Activated CD4-positive, alpha-beta T cell treated with anti-CD3 and anti-CD28 coated beads, Interleukin-2, amount 10 ng/mL, durations not matched to agents 24 days and 14 days (primary cell): ENCODE measurements at regions of chr17 and their contacts with region 1.

Region 1: DNA sequence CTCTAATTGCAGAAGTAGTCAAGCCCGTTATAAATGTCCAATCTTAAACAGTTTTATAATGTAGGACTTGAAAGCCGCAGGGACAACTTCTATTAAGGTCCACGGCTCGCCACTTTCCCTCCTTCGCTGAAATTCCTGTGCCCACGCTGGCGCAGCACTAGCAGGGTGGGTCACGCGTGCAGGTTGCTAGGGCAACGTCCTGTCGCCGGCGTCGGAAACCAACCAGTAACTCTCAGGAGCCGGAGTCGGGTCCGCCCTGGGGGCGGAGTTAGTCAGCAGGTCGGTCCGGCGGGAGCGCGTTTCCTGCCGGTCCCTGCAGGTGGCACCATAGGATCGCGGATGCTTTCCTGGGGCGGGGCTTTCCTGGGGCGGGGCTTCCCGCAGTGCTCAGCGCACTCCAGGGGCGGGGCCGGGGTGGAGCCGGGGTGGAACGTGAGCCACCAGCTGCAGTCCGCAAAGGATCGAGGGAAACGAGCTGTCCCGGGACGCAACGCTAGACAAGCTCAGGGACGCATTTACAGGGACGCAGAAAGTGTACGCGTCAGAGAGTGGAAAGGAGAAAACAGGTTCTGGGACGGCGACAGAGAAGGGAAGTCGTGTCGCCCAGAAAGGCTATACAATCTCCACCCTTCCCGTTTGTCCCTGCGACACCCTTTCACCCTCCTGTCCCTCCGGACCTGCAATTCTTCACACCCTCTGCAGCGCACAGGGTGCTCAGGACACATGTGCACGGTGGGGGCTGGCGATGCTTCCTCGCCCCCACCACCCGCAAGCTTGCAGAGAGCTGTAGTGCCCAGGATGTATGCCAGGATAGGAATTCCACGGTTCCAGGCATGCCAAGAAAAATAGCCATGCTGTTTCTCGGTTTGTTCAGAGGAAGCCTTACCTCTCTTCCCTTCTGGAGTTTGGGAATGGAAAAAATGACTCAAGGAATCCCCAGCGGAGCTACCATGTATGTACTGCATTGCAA is 12.4 kb downstream of the COPZ2 start:
- DNase-seq: peak; percentile 99
- H3K4me3 Mint-ChIP-seq: peak overlapping the region; percentile 88
- H3K27ac Mint-ChIP-seq: peak overlapping the region; percentile 83
- H3K4me1 Mint-ChIP-seq: peaks cover 28% of the 10 kb centered on the region
- H3K27me3 Mint-ChIP-seq: peaks cover 22% of the 10 kb centered on the region

Region 2: DNA sequence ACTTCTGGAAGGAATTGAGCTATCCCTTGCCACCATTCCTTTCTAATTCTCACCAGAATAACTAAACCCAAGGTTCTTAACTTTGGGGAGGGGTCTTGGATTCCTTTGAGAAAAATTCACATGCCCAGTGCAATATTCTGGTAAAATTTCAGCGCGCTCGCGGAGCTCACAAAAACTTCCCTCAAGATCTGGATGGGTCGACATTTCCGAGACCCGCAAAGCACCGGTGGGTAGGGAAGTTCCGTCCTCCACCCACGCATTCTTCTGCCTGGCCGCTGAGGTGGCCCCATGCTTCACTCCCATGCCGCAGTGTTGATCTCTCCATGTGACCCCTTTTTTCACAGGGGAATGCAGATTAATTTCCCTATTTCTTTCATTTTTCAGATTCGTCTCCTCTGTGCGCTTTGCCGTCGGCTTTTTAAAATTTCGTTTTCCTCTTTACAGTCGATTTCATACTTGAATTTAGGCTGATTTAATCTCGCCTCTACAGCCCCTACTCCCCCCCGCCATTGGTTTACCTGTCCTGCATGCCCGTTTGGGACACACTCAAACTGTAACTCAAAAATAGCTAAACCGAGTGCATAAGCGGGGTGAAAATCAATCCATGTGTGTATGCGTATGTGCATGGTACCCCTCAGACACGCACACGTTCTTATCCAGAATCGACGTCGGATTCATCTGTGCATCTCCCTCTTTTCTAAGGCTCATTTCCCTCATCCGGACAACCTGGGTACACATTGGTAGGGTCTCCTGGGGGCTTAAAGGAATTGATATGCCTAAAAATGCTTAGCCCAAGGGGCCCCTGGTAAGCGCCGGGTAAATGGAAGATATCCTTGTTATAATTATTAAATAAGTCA is 172.9 kb before region 1 on chr17:
- intact Hi-C with region 1: no loop called
- DNase-seq: no peak
- H3K4me3 Mint-ChIP-seq: peak overlapping the region; percentile 64
- H3K27ac Mint-ChIP-seq: no peak overlapping the region
- H3K4me1 Mint-ChIP-seq: peaks cover 24% of the 10 kb centered on the region
- H3K27me3 Mint-ChIP-seq: peaks cover 83% of the 10 kb centered on the region

Region 3: GRCh38 chr17:47949136-47949759 is 76.0 kb before region 1 on chr17:
- intact Hi-C with region 1: loop called (anchors 2 kb)
- DNase-seq: peak; percentile 96
- H3K4me3 Mint-ChIP-seq: peak overlapping the region; percentile 71
- H3K27ac Mint-ChIP-seq: peak overlapping the region; percentile 78
- H3K4me1 Mint-ChIP-seq: peaks cover 33% of the 10 kb centered on the region
- H3K27me3 Mint-ChIP-seq: no peaks in the 10 kb centered on the region

Region 4: GRCh38 chr17:47967607-47968243 is 57.5 kb before region 1 on chr17:
- intact Hi-C with region 1: no loop called
- DNase-seq: no peak
- H3K4me3 Mint-ChIP-seq: no peak overlapping the region
- H3K27ac Mint-ChIP-seq: no peak overlapping the region
- H3K4me1 Mint-ChIP-seq: peaks cover 17% of the 10 kb centered on the region
- H3K27me3 Mint-ChIP-seq: no peaks in the 10 kb centered on the region

Region 5: GRCh38 chr17:48047741-48048383 is 22.6 kb after region 1 on chr17 and contains the start of gene NFE2L1:
- intact Hi-C with region 1: loop called (anchors 1 kb)
- DNase-seq: peak; percentile 99
- H3K4me3 Mint-ChIP-seq: peak within 1 kb of the TSS; percentile 96
- H3K27ac Mint-ChIP-seq: peak within 1 kb of the TSS; percentile 96
- H3K4me1 Mint-ChIP-seq: peaks cover 43% of the 10 kb centered on the region
- H3K27me3 Mint-ChIP-seq: no peaks in the 10 kb centered on the region
- total RNA-seq, gene NFE2L1: 85.2 and 93.1 TPM in 2 replicates

Region 6: DNA sequence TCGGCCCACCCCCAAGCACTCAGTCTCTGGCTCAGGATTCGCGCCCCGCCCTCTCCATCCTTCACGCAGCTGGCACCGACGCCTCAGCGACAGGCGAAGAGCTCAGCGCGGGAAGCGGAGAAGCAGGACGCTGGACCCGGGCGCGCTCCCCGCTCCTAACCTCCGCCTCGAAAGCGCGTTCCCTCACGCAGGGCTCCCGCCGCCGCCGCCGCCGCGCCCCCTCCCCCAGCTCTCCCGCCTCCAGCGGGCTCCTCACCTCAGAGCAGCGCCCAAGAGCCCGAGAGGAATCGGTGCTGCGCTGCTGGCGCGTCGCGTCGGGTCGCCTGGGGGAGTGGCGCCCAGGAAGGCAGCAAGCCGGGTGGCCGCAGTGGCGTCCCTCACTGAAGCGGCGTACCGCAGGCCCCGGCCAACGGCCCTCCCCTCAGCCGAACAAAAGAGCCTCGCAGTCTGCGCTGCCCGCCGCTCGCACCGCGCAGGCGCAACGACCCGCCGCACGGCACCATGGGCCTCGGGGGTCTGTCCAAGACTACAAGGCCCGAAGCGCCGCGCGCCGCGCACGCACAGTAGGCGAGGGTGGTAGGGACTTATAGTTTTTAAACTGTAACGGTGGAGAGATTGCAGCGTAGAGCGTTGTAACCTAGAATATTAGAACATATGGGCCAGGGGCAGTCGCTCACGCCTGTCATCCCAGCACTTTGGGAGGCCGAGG is 75.9 kb after region 1 on chr17 and contains the start of gene CBX1:
- intact Hi-C with region 1: loop called (anchors 1 kb)
- DNase-seq: peak; percentile 98
- H3K4me3 Mint-ChIP-seq: peak within 1 kb of the TSS; percentile 99
- H3K27ac Mint-ChIP-seq: peak within 1 kb of the TSS; percentile 89
- H3K4me1 Mint-ChIP-seq: peaks cover 28% of the 10 kb centered on the region
- H3K27me3 Mint-ChIP-seq: no peaks in the 10 kb centered on the region
- total RNA-seq, gene CBX1: 61.3 and 64.6 TPM in 2 replicates

Region 7: DNA sequence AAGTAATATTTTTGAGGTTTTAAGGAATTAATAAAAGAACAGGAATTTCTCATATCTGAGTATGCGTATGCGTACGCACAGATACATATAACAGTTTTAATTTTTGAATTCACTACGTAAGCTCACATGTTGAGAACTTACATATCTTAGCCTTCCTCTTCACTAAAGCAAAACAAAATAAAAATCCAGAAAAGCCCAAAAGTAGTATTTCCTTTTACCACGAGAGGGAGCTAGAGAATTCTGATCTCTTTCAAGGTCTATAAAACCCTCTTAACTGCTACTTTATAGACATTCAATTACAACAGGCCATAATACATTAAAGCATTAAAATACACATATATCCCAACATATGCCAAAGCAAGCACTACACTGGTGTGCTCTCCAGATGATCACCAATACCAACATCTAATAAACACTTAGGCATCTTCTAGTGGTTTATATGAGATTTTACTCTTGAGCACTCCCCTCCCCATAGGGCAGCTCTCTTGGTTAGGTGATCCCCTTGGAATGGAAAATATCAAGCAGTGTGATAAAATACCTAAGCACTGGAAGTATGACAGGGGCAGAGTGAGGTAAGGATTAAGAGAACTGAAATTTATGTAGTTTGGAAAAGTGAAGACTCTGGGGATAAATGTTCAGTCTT is 310.8 kb after region 1 on chr17:
- intact Hi-C with region 1: loop called (anchors 10 kb)
- DNase-seq: peak; percentile 72
- H3K4me3 Mint-ChIP-seq: no peak overlapping the region
- H3K27ac Mint-ChIP-seq: no peak overlapping the region
- H3K4me1 Mint-ChIP-seq: peaks cover 12% of the 10 kb centered on the region
- H3K27me3 Mint-ChIP-seq: no peaks in the 10 kb centered on the region